AG04449 (cell line): ENCODE measurements at regions of chr11 and their contacts with region 1.

Region 1: DNA sequence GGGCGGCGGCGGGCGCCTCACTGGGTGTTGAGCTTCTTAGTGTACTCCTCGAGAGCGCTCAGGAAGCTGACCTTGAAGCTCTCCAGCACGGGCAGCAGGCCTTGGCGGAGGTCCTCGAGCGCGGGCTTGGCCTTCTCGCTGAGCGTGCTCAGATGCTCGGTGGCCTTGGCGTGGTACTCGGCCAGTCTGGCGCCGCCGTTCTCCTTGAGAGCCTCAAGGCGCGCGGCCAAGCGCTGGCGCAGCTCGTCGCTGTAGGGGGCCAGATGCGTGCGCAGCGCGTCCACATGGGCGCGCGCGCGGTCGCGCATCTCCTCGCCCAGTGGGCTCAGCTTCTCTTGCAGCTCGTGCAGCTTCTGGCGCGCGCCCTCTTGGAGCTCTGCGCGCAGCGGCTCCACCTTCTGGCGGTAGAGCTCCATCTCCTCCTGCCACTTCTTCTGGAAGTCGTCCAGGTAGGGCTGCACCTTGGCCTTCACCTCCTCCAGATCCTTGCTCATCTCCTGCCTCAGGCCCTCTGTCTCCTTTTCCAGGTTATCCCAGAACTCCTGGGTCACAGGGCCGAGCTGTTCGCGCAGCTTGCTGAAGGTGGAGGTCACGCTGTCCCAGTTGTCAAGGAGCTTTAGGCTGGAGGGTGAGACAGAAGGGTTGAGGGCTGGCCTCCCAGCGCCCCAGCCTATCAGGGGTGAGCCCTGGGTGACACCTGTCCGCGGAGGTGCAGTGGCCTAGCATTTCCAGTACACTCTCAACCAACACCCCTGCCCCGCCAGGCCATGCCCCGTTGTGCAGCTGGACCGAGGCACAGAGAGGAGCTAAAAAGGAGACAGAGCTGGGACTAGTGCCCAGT is 1.4 kb downstream of the APOA1 start:
- DNase-seq: peak; percentile 55
- H3K4me3 ChIP-seq: peak overlapping the region; percentile 45
- CTCF ChIP-seq: peak; percentile 72

Region 2: GRCh38 chr11:116813781-116814471 is 22.1 kb before region 1 on chr11:
- CTCF ChIA-PET with region 1: interaction called, 10 read pairs
- POLR2A ChIA-PET with region 1: no interaction called
- DNase-seq: no peak
- H3K4me3 ChIP-seq: no peak overlapping the region
- CTCF ChIP-seq: no peak

Region 3: DNA sequence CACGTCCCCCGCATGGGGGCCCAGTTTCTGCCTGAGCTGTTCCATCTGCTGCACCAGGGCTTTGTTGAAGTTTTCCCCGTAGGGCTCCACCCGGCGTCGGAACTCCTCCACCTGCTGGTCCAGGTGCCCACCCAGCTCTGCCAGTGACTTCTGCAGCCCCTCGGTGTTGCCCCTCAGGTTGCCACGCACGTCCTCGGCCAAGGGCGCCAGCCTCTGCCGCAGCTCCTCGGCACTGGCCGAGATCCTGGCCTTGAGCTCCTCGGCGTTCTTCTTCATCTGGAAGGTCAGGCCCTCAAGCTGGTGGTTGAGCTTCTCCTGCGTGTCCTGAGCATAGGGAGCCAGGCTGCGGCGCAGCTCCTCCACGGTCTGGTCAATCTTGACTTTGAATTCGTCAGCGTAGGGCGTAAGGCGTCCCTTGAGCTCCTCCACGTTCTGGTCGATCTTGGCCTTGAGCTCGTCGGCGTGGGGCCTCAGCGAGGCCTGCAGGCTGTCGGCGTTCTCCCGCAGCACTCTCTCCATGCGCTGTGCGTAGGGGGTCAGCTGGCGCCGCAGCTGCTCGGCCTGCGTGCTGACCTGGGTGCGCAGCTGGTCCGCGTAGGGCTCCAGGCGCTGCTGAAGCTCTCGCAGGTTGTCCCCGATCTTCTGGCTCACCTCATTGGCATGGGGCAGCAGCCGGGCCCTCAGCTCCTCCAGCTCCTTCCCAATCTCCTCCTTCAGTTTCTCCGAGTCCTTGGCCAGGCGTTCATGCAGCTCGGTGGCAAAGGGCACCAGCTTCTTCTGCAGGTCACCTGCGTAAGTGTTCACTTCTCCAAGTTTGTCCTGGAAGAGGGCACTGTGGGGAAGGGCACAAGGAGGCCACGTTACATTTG is 14.7 kb before region 1 on chr11:
- CTCF ChIA-PET with region 1: interaction called, 24 read pairs
- POLR2A ChIA-PET with region 1: no interaction called
- DNase-seq: no peak
- H3K4me3 ChIP-seq: no peak overlapping the region
- CTCF ChIP-seq: no peak

Region 4: GRCh38 chr11:116853461-116854073 is 17.6 kb after region 1 on chr11:
- CTCF ChIA-PET with region 1: interaction called, 67 read pairs
- POLR2A ChIA-PET with region 1: interaction called, 7 read pairs
- DNase-seq: peak; percentile 80
- H3K4me3 ChIP-seq: no peak overlapping the region
- CTCF ChIP-seq: no peak

Region 5: DNA sequence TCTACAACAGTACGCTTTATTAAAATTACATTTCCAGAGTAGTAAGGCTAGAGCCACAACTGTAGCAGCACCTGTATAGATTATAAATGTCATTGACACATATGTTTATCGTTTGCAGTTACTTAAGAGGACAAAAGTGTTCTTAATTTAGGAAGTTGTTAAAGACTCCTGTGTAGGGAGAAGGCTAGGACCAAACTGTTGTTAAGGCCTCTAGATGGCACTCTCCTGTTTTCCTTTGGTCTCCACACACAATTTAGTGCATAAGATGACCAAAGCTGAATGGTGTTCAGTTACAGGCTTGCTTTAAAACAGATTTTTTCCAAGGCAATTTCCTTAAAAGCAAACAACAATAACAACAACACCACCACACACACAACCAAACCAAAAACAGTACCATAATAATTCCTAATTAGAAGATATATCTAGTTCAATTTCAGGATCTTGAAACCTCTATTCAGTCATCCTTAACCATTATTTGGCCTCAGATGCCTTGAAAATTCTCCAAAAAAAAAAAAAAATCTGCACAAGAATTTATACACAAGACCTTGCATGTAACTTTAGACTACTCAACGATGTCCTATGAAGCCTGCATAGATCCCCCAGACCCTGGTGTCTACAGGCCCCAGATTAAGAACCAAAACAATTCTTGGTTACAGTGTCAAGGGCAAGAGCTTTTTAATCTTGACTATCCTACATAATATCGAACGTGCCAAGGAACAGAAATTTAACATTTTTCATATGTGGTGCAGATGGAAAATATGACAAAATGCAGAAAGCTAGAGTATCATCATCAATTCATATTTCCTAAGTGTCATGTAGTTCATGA is 44.0 kb after region 1 on chr11:
- CTCF ChIA-PET with region 1: interaction called, 11 read pairs
- POLR2A ChIA-PET with region 1: no interaction called
- DNase-seq: no peak
- H3K4me3 ChIP-seq: no peak overlapping the region
- CTCF ChIP-seq: peak; percentile 76

Region 6: DNA sequence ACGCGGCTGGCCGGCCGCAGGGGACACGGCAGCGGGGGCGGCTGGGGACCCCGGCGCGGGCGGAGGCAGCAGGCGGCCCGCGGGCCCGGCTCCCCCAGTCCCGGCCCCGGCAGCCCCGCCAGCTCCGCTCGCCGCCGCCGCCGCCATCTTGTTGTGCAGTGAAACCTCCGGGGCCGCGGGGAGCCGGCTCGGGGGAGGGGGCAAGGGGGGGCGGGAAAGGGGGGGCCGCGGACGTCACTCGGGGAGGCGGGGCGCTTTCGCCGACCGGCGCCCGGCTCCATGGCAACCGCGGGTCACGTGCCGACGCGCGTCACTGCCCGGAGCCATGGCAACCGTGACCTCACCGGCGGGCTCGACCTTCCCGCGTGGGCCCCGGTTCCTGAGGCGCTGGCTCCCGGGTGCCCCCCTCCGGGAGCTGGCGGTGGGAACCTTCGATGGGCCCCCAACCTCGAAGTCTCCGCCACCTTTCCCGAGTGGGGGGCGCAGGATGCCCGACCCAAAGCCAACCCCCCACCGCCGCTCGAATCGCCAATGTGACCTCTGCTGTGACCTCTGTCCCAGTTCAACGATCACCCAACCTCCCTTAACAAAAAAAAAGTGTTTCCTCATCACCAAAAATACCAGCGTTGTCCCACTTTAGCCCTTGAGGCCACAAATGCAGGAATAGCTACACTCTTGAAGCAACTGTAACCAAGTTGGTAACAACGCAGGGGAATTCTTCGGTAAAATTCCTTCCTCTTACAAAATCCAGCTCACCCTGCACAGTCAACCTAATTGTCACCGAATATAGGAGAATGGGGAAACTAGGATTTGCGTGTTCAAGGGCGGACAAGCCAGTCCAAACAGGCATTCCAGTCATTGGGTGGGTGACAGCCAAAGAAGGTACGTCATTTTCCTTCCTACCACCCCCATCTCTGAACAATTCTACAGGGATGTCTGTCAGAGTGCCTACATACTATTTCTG is 262.5 kb after region 1 on chr11 and contains the start of gene SIK3:
- CTCF ChIA-PET with region 1: interaction called, 28 read pairs
- POLR2A ChIA-PET with region 1: interaction called, 3 read pairs
- DNase-seq: no peak
- H3K4me3 ChIP-seq: peak within 1 kb of the TSS; percentile 83
- CTCF ChIP-seq: peak; percentile 80

Region 7: GRCh38 chr11:117143871-117144476 is 308.0 kb after region 1 on chr11 and contains the start of gene PAFAH1B2:
- CTCF ChIA-PET with region 1: interaction called, 11 read pairs
- POLR2A ChIA-PET with region 1: no interaction called
- DNase-seq: no peak
- H3K4me3 ChIP-seq: peak within 1 kb of the TSS; percentile 89
- CTCF ChIP-seq: no peak